ENCODE measurements at regions of chr14 and their contacts with region 1.

Region 1: GRCh38 chr14:92106143-92106926 is at the start of gene ATXN3:
- DNase-seq: peak; percentile 92 to 98 (median 95)
- H3K4me3 ChIP-seq: peak within 1 kb of the TSS; percentile 80 to 98
- H3K4me3 Mint-ChIP-seq: peak within 1 kb of the TSS; percentile 94 to 100 (median 99)
- H3K27ac ChIP-seq: peak within 1 kb of the TSS; percentile 73
- H3K27ac Mint-ChIP-seq: peak within 1 kb of the TSS; percentile 86 to 97 (median 97)
- H3K4me1 ChIP-seq: peaks cover 55% of the 10 kb centered on the region
- H3K4me1 Mint-ChIP-seq: peaks cover 27 to 55% (median 42%) of the 10 kb centered on the region in 4 donors
- H3K27me3 ChIP-seq: no peaks in the 10 kb centered on the region
- H3K27me3 Mint-ChIP-seq: no peaks in the 10 kb centered on the region
- total RNA-seq, gene ATXN3: 48.9 to 52.4 TPM

Region 2: GRCh38 chr14:90331497-90332435 is 1774.6 kb before region 1 on chr14 and contains the start of gene NRDE2:
- CTCF ChIA-PET with region 1: no interaction called
- POLR2A ChIA-PET with region 1: no interaction called
- intact Hi-C with region 1: loop called (anchors 5 kb)
- DNase-seq: peak; percentile 85 to 87 (median 86)
- H3K4me3 ChIP-seq: peak within 1 kb of the TSS; percentile 63 to 92
- H3K4me3 Mint-ChIP-seq: peak within 1 kb of the TSS; percentile 90 to 96 (median 93)
- H3K27ac ChIP-seq: peak within 1 kb of the TSS; percentile 70
- H3K27ac Mint-ChIP-seq: peak within 1 kb of the TSS; percentile 91 to 97 (median 96)
- H3K4me1 ChIP-seq: peaks cover 15% of the 10 kb centered on the region
- H3K4me1 Mint-ChIP-seq: peaks cover 14 to 38% (median 31%) of the 10 kb centered on the region in 4 donors
- H3K27me3 ChIP-seq: no peaks in the 10 kb centered on the region
- H3K27me3 Mint-ChIP-seq: peaks cover 7% of the 10 kb centered on the region in 2 donors
- total RNA-seq, gene NRDE2: 26.3 to 32.6 TPM

Region 3: GRCh38 chr14:91264151-91265150 is 841.9 kb before region 1 on chr14:
- CTCF ChIA-PET with region 1: no interaction called
- POLR2A ChIA-PET with region 1: no interaction called
- intact Hi-C with region 1: no loop called
- DNase-seq: peak in 2 of 5 donors; percentile 39 to 41
- H3K4me3 ChIP-seq: peak overlapping the region in 1 of 2 donors; percentile 32
- H3K4me3 Mint-ChIP-seq: peak overlapping the region; percentile 69 to 85 (median 79)
- H3K27ac ChIP-seq: peak overlapping the region; percentile 31
- H3K27ac Mint-ChIP-seq: peak overlapping the region in 6 of 7 donors; percentile 60 to 97 (median 84)
- H3K4me1 ChIP-seq: peaks cover 45% of the 10 kb centered on the region
- H3K4me1 Mint-ChIP-seq: peaks cover 39 to 69% (median 46%) of the 10 kb centered on the region in 4 donors
- H3K27me3 ChIP-seq: no peaks in the 10 kb centered on the region
- H3K27me3 Mint-ChIP-seq: no peaks in the 10 kb centered on the region

Region 4: GRCh38 chr14:91510174-91511042 is 595.9 kb before region 1 on chr14 and contains the start of gene PPP4R3A:
- CTCF ChIA-PET with region 1: no interaction called
- POLR2A ChIA-PET with region 1: interaction called, 9 read pairs
- intact Hi-C with region 1: loop called (anchors 1 kb)
- DNase-seq: peak; percentile 93 to 95 (median 95)
- H3K4me3 ChIP-seq: peak within 1 kb of the TSS; percentile 59 to 88
- H3K4me3 Mint-ChIP-seq: peak within 1 kb of the TSS; percentile 97 to 100 (median 100)
- H3K27ac ChIP-seq: peak within 1 kb of the TSS; percentile 99
- H3K27ac Mint-ChIP-seq: peak within 1 kb of the TSS; percentile 99 to 100 (median 100)
- H3K4me1 ChIP-seq: peaks cover 37% of the 10 kb centered on the region
- H3K4me1 Mint-ChIP-seq: peaks cover 21 to 44% (median 29%) of the 10 kb centered on the region in 4 donors
- H3K27me3 ChIP-seq: no peaks in the 10 kb centered on the region
- H3K27me3 Mint-ChIP-seq: no peaks in the 10 kb centered on the region
- total RNA-seq, gene PPP4R3A: 162 to 169 TPM

Region 5: GRCh38 chr14:92039719-92040430 is 66.5 kb before region 1 on chr14 and contains the start of gene TRIP11:
- CTCF ChIA-PET with region 1: interaction called, 19 read pairs
- POLR2A ChIA-PET with region 1: interaction called, 56 read pairs
- intact Hi-C with region 1: loop called (anchors 1 kb)
- DNase-seq: peak; percentile 94 to 97 (median 95)
- H3K4me3 ChIP-seq: peak within 1 kb of the TSS; percentile 51 to 71
- H3K4me3 Mint-ChIP-seq: peak within 1 kb of the TSS; percentile 93 to 100 (median 96)
- H3K27ac ChIP-seq: peak within 1 kb of the TSS; percentile 89
- H3K27ac Mint-ChIP-seq: peak within 1 kb of the TSS; percentile 97 to 99 (median 99)
- H3K4me1 ChIP-seq: peaks cover 43% of the 10 kb centered on the region
- H3K4me1 Mint-ChIP-seq: peaks cover 31 to 59% (median 43%) of the 10 kb centered on the region in 4 donors
- H3K27me3 ChIP-seq: no peaks in the 10 kb centered on the region
- H3K27me3 Mint-ChIP-seq: no peaks in the 10 kb centered on the region
- total RNA-seq, gene TRIP11: 68.0 to 68.7 TPM

Region 6: GRCh38 chr14:92274055-92274454 is 167.7 kb after region 1 on chr14:
- CTCF ChIA-PET with region 1: no interaction called
- POLR2A ChIA-PET with region 1: no interaction called
- intact Hi-C with region 1: no loop called
- DNase-seq: no peak
- H3K4me3 ChIP-seq: no peak overlapping the region
- H3K4me3 Mint-ChIP-seq: no peak overlapping the region
- H3K27ac ChIP-seq: no peak overlapping the region
- H3K27ac Mint-ChIP-seq: no peak overlapping the region
- H3K4me1 ChIP-seq: no peaks in the 10 kb centered on the region
- H3K4me1 Mint-ChIP-seq: no peaks in the 10 kb centered on the region
- H3K27me3 ChIP-seq: no peaks in the 10 kb centered on the region
- H3K27me3 Mint-ChIP-seq: peaks cover 12 to 27% of the 10 kb centered on the region in 2 donors

Region 7: DNA sequence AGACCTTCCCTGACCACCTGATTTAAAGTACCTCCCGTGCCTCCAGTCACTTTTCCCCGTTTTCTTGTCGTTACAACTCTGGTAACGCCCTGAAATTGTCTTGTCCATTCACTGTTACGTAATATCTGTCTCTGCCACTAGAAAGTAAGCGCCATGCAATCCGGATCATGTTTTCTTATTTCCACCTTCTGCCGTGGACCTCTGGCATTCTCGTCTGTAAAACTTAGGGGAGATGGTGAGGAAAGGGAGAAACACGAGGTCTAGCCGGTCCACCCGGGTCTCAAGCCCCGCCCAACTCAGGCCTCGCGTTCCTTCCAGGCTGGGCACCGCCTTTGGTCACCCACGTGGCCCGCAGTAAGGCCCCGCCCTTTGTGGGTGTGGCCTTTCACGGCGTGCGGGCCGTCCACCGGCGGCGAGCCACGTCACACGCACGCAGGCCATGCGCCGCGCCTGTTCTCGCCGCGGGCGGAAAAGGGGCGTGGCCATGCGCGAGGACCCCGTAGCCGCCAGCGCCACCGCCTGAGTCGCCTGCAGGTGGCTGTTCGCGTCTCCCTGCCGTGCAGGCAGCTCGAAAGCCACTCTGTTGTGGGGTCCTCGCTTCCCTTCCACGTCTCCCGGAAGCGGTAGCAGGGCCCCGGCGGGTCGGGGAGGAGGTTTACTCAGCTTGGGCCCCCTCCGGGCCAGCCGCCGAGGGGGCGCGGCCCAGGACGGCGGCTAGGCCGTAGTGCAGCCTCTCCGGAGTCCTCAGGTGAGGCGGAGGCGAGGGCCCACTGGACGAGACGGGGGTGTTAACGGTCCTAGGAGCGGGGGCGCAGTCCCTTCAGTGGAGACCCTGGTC is 687.6 kb after region 1 on chr14 and contains the start of gene GOLGA5:
- CTCF ChIA-PET with region 1: no interaction called
- POLR2A ChIA-PET with region 1: interaction called, 3 read pairs
- intact Hi-C with region 1: loop called (anchors 5 kb)
- DNase-seq: peak; percentile 97 to 100 (median 99)
- H3K4me3 ChIP-seq: peak within 1 kb of the TSS; percentile 67 to 94
- H3K4me3 Mint-ChIP-seq: peak within 1 kb of the TSS; percentile 84 to 98 (median 96)
- H3K27ac ChIP-seq: peak within 1 kb of the TSS; percentile 85
- H3K27ac Mint-ChIP-seq: peak within 1 kb of the TSS; percentile 77 to 98 (median 95)
- H3K4me1 ChIP-seq: peaks cover 30% of the 10 kb centered on the region
- H3K4me1 Mint-ChIP-seq: peaks cover 26 to 46% (median 35%) of the 10 kb centered on the region in 4 donors
- H3K27me3 ChIP-seq: no peaks in the 10 kb centered on the region
- H3K27me3 Mint-ChIP-seq: no peaks in the 10 kb centered on the region
- total RNA-seq, gene GOLGA5: 27.4 to 29.8 TPM

Measured in CD4-positive, alpha-beta memory T cell (primary cell).